ENCODE measurements at regions of chr14 and their contacts with region 1.

Region 1: GRCh38 chr14:51901475-51902024 is 41.1 kb downstream of the GNG2 start:
- DNase-seq: no peak
- H3K4me3 ChIP-seq: no peak overlapping the region
- CTCF ChIP-seq: no peak

Region 2: DNA sequence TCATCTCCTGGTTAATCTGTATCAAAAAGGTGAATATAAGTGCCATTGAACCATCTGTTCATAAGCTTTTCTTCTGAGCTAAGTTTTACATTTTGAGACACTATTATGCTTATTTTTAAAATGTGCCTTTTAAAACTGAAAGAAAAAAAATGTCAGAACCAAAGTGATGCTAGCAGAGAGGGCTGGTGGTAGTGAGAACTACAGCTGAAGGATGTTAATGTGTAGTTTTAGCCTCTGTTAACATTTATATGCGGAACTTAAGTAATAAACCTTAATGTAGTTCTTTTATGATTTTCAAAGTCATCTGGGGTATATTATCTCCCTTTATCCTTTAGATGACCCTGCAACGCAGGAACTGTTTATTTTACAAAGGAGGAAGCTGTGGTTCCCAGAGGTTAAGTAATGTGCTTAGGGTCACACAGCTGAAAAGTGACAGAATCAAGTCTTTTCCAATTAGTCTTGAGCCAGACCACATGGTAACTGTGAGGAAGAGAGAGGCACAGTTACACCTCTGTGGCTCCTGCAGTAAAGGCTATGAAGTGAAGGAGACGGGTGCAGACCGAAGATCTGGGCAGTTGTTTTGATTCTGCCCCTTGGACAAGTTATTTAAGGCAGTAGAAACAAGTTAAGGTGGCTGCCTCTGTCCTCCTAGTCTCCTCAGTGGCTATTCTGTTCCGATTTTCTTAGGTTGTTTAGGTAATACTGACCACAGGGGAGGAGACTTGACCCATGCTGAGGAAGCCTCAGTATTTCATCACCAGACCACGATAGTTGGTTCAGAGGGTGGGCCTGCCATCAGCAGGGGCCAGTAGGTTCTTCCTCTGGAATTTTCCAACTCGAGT is 17.2 kb before region 1 on chr14:
- CTCF ChIA-PET with region 1: interaction called, 10 read pairs
- POLR2A ChIA-PET with region 1: no interaction called
- DNase-seq: no peak
- H3K4me3 ChIP-seq: no peak overlapping the region
- CTCF ChIP-seq: no peak

Region 3: DNA sequence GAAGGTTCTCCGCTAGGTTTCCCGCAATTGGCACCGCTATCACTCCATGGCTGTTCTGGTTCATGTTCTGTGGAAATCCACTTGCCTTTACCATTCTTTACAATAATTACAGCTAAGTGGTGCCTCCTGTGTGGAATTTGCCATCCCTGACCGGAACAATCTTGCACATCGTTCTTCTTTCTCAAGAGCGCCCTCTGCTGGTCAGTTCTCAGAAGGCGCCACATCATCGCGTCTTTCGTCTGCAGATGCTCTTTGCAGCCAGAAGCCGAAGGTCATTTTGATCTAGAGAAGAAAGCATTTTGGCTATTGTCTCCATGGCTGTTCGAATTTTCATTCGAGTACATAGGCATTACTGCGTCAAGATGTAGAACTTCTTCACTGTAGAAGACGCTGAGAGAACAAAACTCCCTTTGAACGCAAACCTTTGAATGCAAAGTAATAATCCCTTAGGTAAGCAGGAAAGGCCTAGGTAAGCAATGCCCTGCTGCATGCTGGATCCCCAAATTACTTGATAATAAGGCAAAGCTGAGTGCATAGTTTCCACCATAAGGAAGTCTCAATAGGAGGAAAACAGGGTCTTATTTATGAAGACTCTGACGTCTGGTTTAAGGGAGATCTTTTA is 77.6 kb after region 1 on chr14:
- CTCF ChIA-PET with region 1: no interaction called
- POLR2A ChIA-PET with region 1: no interaction called
- DNase-seq: no peak
- H3K4me3 ChIP-seq: no peak overlapping the region
- CTCF ChIP-seq: peak; percentile 82

Measured in AG04449 (cell line).